Cardiac septum (tissue), 1 donor: ENCODE measurements at regions of chr4 and their contacts with region 1.

Region 1: DNA sequence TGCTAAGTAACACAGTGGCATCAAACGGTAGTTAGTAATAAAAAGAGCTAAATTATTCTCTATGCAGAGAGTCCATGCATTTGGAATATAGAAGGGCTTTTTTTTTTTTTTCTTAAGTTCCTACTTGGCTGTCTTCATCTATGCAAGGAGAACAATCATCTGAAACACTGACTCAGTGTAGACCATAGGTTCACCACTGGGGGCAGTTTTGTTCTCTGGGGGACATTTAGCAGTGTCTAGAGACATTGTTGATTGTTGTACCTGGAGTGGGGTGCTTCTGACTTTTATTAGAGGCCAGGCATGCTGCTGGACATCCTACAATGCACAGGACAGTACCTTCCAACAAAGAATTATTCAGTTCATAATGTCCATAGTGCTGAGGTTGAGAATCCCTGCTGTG is 41.2 kb downstream of the TMA16 start:
- DNase-seq: no peak

Region 2: DNA sequence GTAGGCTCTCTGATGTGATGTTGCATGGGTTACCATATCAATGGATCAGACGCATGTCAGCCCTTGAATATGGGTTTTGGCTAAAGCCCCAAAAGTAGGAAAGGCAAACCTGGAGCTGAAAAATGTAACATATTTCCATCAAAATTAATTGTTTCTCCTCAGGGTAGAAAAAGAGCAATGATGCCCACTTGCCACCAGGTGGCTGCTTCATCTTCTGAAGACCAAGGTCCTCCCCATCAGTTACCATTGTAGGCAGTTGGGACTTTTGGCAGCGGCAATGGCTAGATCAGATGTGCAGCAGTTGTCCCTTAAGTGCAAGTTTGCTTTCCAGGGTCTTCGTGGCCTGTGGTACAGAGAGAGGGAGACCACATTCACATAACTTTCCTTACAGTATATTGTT is 487.2 kb before region 1 on chr4:
- intact Hi-C with region 1: loop called (anchors 10 kb)
- DNase-seq: no peak

Region 3: GRCh38 chr4:163295138-163295537 is 240.5 kb before region 1 on chr4:
- intact Hi-C with region 1: no loop called
- DNase-seq: no peak

Region 4: GRCh38 chr4:163988865-163989264 is 453.2 kb after region 1 on chr4:
- intact Hi-C with region 1: no loop called
- DNase-seq: no peak